Adrenal gland (tissue), 19 donors: ENCODE measurements at regions of chr3 and their contacts with region 1.

Region 1: DNA sequence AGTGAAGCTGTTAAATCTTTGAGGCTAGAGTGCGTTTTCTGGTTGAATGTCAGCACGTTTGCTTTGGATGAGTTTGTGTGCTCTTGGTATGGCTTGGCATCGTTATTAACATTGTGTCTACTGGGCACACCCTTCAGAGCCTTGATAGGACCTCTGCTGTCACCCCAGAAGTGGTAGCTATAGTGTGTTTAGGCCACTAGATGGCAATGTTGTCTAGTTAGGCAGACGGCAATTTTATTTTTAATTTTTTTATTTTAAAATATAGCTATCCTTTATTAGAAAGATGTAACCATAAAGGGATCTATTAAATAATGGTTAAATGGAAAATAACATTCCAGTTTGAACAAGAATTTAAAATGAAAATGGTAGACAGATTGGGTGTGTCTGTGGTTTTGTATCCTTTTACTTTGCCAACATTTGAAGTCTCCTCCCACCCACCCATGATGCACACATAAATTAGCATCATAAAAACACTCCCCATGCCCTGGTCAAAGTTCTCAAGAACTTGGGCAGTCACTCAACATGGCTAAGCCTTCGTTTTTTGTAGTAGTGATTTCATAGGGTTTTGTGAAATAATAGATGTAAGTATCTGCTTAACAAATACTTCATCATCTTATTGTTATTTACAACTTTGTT is 200.7 kb downstream of the KCNH8 start:
- DNase-seq: peak in 1 of 7 donors; percentile 23
- H3K4me3 ChIP-seq: no peak overlapping the region
- H3K27ac ChIP-seq: no peak overlapping the region
- H3K4me1 ChIP-seq: no peaks in the 10 kb centered on the region
- H3K27me3 ChIP-seq: no peaks in the 10 kb centered on the region
- CTCF ChIP-seq: peak; percentile 21 to 72 (median 54)
- POLR2A ChIP-seq: no peak

Region 2: DNA sequence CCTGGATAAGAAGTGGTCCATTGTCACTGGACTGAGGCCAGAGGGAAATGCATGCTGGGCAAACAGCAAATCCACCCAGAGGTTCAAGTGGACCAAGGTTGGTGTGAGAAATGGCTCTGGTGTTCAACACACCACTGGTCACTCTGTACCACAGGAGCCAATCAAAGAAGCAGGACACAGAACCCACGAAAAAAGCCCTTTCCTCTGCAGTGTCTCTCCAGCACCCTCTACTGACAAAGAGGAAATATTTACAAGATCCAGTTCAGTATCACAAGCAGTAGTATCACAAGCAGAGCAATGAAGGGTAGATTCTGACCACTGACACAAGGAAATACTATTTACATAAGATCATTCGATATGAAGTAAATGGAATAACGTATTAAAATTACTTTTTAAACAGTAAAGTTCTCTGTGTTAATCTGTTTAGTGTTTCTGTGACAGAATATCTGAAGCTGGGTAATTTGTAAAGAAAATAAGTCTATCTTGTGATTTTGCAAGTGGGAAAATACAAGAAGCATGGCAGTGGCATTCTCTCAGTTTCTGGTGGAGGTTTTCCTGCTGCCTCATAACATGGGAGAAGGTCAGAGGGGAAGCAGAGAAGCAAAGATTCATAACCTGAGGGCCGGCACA is 194.3 kb after region 1 on chr3:
- intact Hi-C with region 1: loop called in 1 of 2 experiments (anchors 10 kb)
- DNase-seq: peak in 5 of 7 donors; percentile 8 to 56 (median 22)
- H3K4me3 ChIP-seq: no peak overlapping the region
- H3K27ac ChIP-seq: no peak overlapping the region
- H3K4me1 ChIP-seq: no peaks in the 10 kb centered on the region
- H3K27me3 ChIP-seq: no peaks in the 10 kb centered on the region
- CTCF ChIP-seq: peak in 5 of 6 experiments; percentile 25 to 61 (median 47)
- POLR2A ChIP-seq: no peak

Region 3: DNA sequence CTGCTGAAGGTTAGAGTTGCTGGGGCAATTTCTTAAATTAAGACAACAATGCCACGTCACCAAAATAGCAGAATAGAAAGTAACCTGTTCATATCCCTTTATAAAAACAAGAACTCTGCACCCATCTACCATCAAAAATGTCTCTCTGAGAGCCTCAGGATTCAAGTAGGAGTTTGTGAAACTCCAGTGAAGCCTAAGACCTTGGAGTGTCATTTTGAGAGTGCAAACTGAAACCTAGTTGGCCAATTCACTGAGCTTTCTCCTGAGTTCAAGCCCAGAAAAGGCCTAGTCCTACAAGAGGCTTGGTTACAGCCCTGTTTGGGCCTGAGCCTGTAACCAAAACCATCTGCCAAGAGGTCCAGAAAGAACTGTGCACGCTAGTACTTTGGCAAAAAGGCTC is 249.8 kb after region 1 on chr3:
- intact Hi-C with region 1: no loop called
- DNase-seq: no peak
- H3K4me3 ChIP-seq: no peak overlapping the region
- H3K27ac ChIP-seq: no peak overlapping the region
- H3K4me1 ChIP-seq: no peaks in the 10 kb centered on the region
- H3K27me3 ChIP-seq: no peaks in the 10 kb centered on the region
- CTCF ChIP-seq: no peak
- POLR2A ChIP-seq: no peak

Region 4: GRCh38 chr3:19798324-19798723 is 449.3 kb after region 1 on chr3:
- intact Hi-C with region 1: no loop called
- DNase-seq: no peak
- H3K4me3 ChIP-seq: no peak overlapping the region
- H3K27ac ChIP-seq: no peak overlapping the region
- H3K4me1 ChIP-seq: no peaks in the 10 kb centered on the region
- H3K27me3 ChIP-seq: no peaks in the 10 kb centered on the region
- CTCF ChIP-seq: no peak
- POLR2A ChIP-seq: no peak

Region 5: GRCh38 chr3:19866751-19867347 is 517.8 kb after region 1 on chr3:
- intact Hi-C with region 1: loop called in 1 of 2 experiments (anchors 10 kb)
- DNase-seq: peak; percentile 26 to 74 (median 44)
- H3K4me3 ChIP-seq: no peak overlapping the region
- H3K27ac ChIP-seq: no peak overlapping the region
- H3K4me1 ChIP-seq: no peaks in the 10 kb centered on the region
- H3K27me3 ChIP-seq: no peaks in the 10 kb centered on the region
- CTCF ChIP-seq: peak; percentile 58 to 75 (median 70)
- POLR2A ChIP-seq: no peak